Esophagus squamous epithelium (tissue), 5 donors: ENCODE measurements at regions of chr17 and their contacts with region 1.

Region 1: GRCh38 chr17:41966463-41967140 is at the start of gene CNP:
- DNase-seq: peak; percentile 40
- H3K4me3 ChIP-seq: peak within 1 kb of the TSS; percentile 77 to 96 (median 91)
- H3K27ac ChIP-seq: peak within 1 kb of the TSS; percentile 90 to 97 (median 94)
- H3K4me1 ChIP-seq: peaks cover 24 to 71% (median 33%) of the 10 kb centered on the region in 3 donors
- H3K27me3 ChIP-seq: no peaks in the 10 kb centered on the region
- CTCF ChIP-seq: peak in 1 of 6 experiments; percentile 17
- POLR2A ChIP-seq: peak in 2 of 4 donors; percentile 81 to 83
- total RNA-seq, gene CNP: 45.3 to 66.0 (median 53.0) TPM

Region 2: DNA sequence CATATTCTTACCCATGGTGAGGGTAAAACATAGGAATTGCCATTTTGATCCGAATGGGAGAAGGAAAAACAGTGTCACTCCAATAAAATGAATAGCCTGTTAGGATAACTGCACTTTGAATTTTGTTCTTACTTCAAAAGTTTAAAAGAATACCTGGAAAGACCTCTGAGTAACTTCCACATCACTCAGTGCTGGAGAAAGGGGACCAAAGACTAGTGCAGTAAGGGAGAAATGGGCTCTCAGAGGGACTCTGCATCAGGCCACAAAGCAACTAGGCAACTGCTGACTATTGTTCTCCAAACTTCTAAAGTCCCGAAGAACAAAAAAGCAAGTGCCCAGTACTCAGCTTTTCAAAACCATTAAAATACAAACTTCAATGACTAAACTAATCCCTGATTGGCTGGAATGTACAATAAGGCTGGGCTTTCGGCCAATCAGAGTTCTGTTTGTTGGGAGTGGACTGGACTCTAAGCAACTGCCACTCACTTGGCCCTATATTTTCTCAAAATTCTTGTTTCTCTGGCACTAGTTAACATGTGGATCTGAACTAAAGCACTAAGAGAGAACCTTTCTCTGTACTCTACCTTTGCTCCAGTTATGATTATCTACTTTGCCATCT is 44.4 kb after region 1 on chr17:
- intact Hi-C with region 1: loop called (anchors 5 kb)
- DNase-seq: no peak
- H3K4me3 ChIP-seq: no peak overlapping the region
- H3K27ac ChIP-seq: peak overlapping the region; percentile 44 to 77 (median 56)
- H3K4me1 ChIP-seq: peaks cover 33 to 86% (median 39%) of the 10 kb centered on the region in 3 donors
- H3K27me3 ChIP-seq: no peaks in the 10 kb centered on the region
- CTCF ChIP-seq: no peak
- POLR2A ChIP-seq: no peak